ENCODE measurements at regions of chr13 and their contacts with region 1.

Region 1: GRCh38 chr13:52968074-52968700 is 60.4 kb upstream of the OLFM4 start:
- DNase-seq: peak; percentile 78
- ATAC-seq: peak; percentile 88
- H3K4me3 ChIP-seq: no peak overlapping the region
- H3K27ac ChIP-seq: no peak overlapping the region
- H3K4me1 ChIP-seq: no peaks in the 10 kb centered on the region
- H3K27me3 ChIP-seq: no peaks in the 10 kb centered on the region
- CTCF ChIP-seq: peak; percentile 95

Region 2: GRCh38 chr13:52665325-52665724 is 302.9 kb before region 1 on chr13:
- CTCF ChIA-PET with region 1: interaction called, 16 read pairs
- POLR2A ChIA-PET with region 1: no interaction called
- intact Hi-C with region 1: loop called (anchors 2 kb)
- DNase-seq: peak; percentile 39
- ATAC-seq: no peak
- H3K4me3 ChIP-seq: no peak overlapping the region
- H3K27ac ChIP-seq: no peak overlapping the region
- H3K4me1 ChIP-seq: no peaks in the 10 kb centered on the region
- H3K27me3 ChIP-seq: no peaks in the 10 kb centered on the region
- CTCF ChIP-seq: peak; percentile 58

Region 3: GRCh38 chr13:52797176-52797575 is 171.0 kb before region 1 on chr13:
- CTCF ChIA-PET with region 1: no interaction called
- POLR2A ChIA-PET with region 1: no interaction called
- intact Hi-C with region 1: no loop called
- DNase-seq: no peak
- ATAC-seq: no peak
- H3K4me3 ChIP-seq: no peak overlapping the region
- H3K27ac ChIP-seq: no peak overlapping the region
- H3K4me1 ChIP-seq: no peaks in the 10 kb centered on the region
- H3K27me3 ChIP-seq: peaks cover 26% of the 10 kb centered on the region
- CTCF ChIP-seq: no peak

Region 4: DNA sequence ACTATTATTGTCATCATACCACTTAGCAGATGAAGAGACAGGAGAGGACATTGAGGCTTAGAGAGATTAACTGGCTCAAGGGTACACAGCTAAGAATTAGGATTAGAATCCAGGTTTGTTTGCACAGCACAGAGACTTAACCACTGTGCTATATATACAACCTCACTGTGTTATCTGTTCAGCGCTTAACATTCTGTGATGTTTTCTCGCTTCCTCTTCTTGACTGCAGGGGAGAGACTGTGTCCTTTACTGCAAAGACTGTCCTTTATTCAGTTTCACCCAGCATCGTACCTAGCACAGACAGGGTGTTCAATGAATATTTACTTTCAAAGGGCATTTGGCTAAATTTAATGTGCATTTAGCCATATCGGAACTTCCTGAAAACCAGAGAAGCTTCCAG is 64.9 kb before region 1 on chr13:
- CTCF ChIA-PET with region 1: no interaction called
- POLR2A ChIA-PET with region 1: no interaction called
- intact Hi-C with region 1: no loop called
- DNase-seq: no peak
- ATAC-seq: no peak
- H3K4me3 ChIP-seq: no peak overlapping the region
- H3K27ac ChIP-seq: no peak overlapping the region
- H3K4me1 ChIP-seq: no peaks in the 10 kb centered on the region
- H3K27me3 ChIP-seq: peaks cover 38% of the 10 kb centered on the region
- CTCF ChIP-seq: no peak